CD8-positive, alpha-beta T cell (primary cell): ENCODE measurements at regions of chr14 and their contacts with region 1.

Region 1: DNA sequence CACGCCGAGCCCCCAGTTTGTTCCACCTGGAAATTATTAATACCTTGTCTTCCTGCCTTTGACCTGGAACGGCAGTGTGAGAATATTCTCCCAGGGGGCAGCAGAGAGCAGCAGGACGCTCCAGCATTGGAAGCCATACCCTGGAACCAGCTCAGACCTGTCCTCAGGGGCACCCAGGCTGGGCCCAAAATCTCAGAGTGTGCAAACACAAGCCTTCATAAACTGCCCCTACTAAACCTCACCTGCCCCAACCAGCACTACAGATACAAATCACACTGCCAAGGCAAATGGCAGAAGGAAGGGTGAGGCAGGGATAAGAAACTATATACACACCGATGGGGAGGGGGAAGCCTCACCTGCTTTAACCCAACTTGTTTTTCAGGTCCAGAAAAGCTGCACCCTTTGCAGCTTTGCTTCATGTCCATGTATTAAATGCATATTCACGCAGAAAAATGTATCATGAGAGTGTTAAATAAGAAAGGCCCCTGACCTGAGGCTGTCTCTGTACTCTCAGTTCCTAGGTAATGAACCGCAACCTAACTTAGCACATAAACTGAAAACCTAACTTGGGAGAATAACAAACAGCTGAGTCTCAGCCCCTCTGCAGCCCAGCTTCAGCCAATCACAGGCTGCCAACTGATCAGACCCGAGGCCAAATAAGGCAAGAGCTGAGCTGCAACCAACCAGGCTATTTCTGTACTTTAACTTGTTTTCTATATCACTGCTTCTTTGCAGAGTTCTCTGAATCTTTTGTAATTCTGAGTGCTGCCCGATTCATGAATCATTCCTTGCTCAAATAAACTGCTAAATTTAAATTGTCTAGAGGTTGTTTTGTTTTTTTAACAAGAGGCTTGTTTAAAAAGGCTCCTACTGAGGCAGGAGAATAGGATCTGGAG is 130.1 kb downstream of the SPTSSA start:
- DNase-seq: peak; percentile 29 to 68 (median 48)
- ATAC-seq: peak; percentile 64
- H3K4me3 ChIP-seq: no peak overlapping the region
- H3K4me3 Mint-ChIP-seq: no peak overlapping the region
- H3K27ac ChIP-seq: no peak overlapping the region
- H3K27ac Mint-ChIP-seq: no peak overlapping the region
- H3K4me1 ChIP-seq: no peaks in the 10 kb centered on the region
- H3K4me1 Mint-ChIP-seq: peaks cover 10% of the 10 kb centered on the region
- H3K27me3 ChIP-seq: no peaks in the 10 kb centered on the region
- H3K27me3 Mint-ChIP-seq: no peaks in the 10 kb centered on the region
- CTCF ChIP-seq: peak; percentile 64

Region 2: DNA sequence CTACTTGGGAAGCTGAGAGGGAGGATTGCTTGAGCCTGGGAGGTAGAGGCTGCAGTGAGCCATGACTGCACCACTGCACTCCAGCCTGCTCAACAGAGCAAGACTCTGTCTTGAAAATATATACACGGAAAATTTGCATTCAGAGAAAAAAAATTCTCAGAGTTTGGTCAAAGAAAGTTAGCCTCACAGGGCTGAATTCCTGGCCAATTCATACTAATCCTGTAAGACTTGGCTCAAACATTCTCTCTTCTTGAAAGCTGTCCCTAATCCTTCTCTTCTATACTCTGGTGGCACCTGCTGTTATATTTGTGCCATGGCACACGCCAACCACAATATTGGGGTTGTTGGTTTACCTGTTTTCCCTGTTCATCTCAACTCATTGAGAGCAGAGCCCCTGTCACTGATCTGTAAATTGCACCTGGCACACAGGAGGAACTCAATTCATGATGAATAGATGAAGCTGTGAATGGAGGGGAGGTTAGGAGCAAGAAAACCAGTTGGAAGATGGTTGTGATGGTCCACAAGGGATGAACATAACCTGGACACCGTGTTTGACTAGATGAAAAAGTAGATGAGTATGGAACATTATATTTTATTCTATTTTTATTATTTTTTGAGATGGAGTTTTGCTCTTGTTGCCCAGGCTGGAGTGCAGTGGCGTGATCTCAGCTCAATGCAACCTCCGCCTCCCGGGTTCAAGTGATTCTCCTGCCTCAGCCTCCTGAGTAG is 166.9 kb after region 1 on chr14:
- CTCF ChIA-PET with region 1: interaction called, 4 read pairs
- POLR2A ChIA-PET with region 1: no interaction called
- intact Hi-C with region 1: loop called in 1 of 2 experiments (anchors 2 kb)
- DNase-seq: peak in 2 of 9 experiments; percentile 9 to 14
- ATAC-seq: no peak
- H3K4me3 ChIP-seq: no peak overlapping the region
- H3K4me3 Mint-ChIP-seq: no peak overlapping the region
- H3K27ac ChIP-seq: no peak overlapping the region
- H3K27ac Mint-ChIP-seq: no peak overlapping the region
- H3K4me1 ChIP-seq: no peaks in the 10 kb centered on the region
- H3K4me1 Mint-ChIP-seq: no peaks in the 10 kb centered on the region
- H3K27me3 ChIP-seq: no peaks in the 10 kb centered on the region
- H3K27me3 Mint-ChIP-seq: no peaks in the 10 kb centered on the region
- CTCF ChIP-seq: peak; percentile 27